ENCODE measurements at regions of chr4 and their contacts with region 1.

Region 1: DNA sequence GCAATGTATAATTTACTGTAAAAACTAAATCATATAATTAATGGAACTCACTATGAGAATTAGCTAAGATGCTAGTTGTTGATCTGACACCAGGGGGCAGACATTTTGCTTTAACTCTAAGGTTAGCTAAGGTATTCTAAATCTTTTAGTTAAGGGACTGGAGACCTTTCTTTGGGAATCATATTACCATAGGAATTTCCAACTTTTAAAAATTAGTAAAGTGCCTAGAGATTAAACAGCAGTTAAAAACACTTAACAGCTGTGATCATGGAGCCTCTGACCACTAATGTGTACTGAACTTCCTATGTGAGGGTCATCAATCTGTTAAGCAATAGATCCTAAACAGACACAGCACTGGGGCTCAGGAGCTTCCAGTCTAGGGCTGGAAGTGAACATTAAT is 226.6 kb downstream of the NSUN7 start:
- DNase-seq: peak; percentile 77
- H3K4me3 Mint-ChIP-seq: no peak overlapping the region
- H3K27ac Mint-ChIP-seq: peak overlapping the region; percentile 55
- H3K4me1 Mint-ChIP-seq: peaks cover 15% of the 10 kb centered on the region
- H3K27me3 Mint-ChIP-seq: no peaks in the 10 kb centered on the region
- CTCF ChIP-seq: peak; percentile 49

Region 2: GRCh38 chr4:40905414-40905813 is 70.9 kb before region 1 on chr4:
- CTCF ChIA-PET with region 1: no interaction called
- POLR2A ChIA-PET with region 1: no interaction called
- intact Hi-C with region 1: no loop called
- DNase-seq: no peak
- H3K4me3 Mint-ChIP-seq: no peak overlapping the region
- H3K27ac Mint-ChIP-seq: peak overlapping the region; percentile 58
- H3K4me1 Mint-ChIP-seq: peaks cover 23% of the 10 kb centered on the region
- H3K27me3 Mint-ChIP-seq: no peaks in the 10 kb centered on the region
- CTCF ChIP-seq: no peak

Region 3: DNA sequence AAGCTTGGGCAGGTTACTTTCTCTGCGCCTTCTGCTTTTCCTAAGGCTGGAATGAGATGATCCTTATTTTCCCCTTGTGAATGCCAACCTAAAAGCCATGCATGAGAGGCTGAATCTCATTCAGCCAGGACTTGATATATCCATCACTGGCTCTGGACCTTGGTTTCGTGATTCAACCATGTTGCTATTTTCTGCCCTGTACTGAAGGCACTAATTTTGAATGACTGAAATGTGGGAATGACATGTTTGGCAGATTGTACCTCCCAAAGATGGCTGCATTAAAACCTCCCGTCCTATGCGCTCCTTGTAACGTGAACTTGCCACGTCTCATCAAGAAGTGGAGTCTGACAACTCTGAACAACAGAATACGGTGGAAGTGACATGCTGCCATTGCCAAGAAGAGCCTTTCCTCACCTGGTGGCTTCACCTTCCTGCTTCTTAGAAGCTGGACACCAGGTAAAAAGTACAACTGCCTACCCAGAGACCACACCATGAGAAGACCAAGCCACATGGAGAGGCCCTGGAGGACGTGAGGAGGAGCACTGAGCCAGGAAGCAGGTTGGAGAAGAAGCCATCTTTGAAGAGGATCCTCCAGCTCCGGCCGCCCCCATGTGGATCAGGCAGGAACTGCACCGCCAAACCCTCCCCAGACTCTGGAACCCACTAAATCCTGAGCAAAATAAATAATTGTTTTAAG is 52.1 kb before region 1 on chr4:
- CTCF ChIA-PET with region 1: interaction called, 11 read pairs
- POLR2A ChIA-PET with region 1: no interaction called
- intact Hi-C with region 1: loop called (anchors 2 kb)
- DNase-seq: peak; percentile 69
- H3K4me3 Mint-ChIP-seq: no peak overlapping the region
- H3K27ac Mint-ChIP-seq: no peak overlapping the region
- H3K4me1 Mint-ChIP-seq: peaks cover 25% of the 10 kb centered on the region
- H3K27me3 Mint-ChIP-seq: no peaks in the 10 kb centered on the region
- CTCF ChIP-seq: peak; percentile 77

Region 4: GRCh38 chr4:40986375-40986774 is 10.0 kb after region 1 on chr4:
- CTCF ChIA-PET with region 1: interaction called, 48 read pairs
- POLR2A ChIA-PET with region 1: interaction called, 6 read pairs
- intact Hi-C with region 1: no loop called
- DNase-seq: no peak
- H3K4me3 Mint-ChIP-seq: no peak overlapping the region
- H3K27ac Mint-ChIP-seq: peak overlapping the region; percentile 16
- H3K4me1 Mint-ChIP-seq: peaks cover 31% of the 10 kb centered on the region
- H3K27me3 Mint-ChIP-seq: no peaks in the 10 kb centered on the region
- CTCF ChIP-seq: no peak

Region 5: GRCh38 chr4:40992472-40993295 is 16.3 kb after region 1 on chr4:
- CTCF ChIA-PET with region 1: interaction called, 48 read pairs
- POLR2A ChIA-PET with region 1: interaction called, 11 read pairs
- intact Hi-C with region 1: no loop called
- DNase-seq: peak; percentile 75
- H3K4me3 Mint-ChIP-seq: peak overlapping the region; percentile 43
- H3K27ac Mint-ChIP-seq: peak overlapping the region; percentile 80
- H3K4me1 Mint-ChIP-seq: peaks cover 63% of the 10 kb centered on the region
- H3K27me3 Mint-ChIP-seq: no peaks in the 10 kb centered on the region
- CTCF ChIP-seq: no peak

Region 6: DNA sequence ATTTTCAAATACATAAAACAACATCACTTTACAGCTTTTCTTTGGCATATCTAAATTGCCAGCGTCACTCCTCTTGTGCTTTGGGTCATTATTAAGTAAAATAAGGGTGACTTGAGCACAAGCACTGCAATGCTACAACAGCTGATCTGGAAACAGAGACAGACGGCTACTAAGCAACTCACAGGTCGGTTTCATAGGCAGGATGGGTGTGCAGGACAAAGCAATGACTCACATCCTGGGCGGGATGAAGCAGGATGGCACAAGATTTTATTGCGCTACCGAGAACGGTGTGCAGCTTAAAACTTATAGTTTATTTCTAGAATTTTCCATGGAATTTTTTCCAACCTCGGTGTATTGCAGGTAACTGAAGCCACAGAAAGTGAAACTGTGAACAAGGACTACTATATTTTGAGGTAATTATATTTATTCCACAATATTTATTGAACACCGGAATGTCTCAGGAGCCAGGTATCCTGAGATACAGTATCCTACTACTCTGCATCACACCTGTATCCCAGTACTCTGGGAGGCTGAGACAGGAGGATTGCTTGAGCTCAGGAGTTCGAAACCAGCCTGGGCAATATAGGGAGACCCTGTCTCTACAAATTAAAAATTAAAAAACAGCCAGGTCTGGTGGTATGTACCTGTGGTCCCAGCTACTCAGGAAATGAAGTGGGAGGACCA is 22.5 kb after region 1 on chr4:
- CTCF ChIA-PET with region 1: interaction called, 8 read pairs
- POLR2A ChIA-PET with region 1: interaction called, 11 read pairs
- intact Hi-C with region 1: no loop called
- DNase-seq: peak; percentile 92
- H3K4me3 Mint-ChIP-seq: peak overlapping the region; percentile 31
- H3K27ac Mint-ChIP-seq: peak overlapping the region; percentile 74
- H3K4me1 Mint-ChIP-seq: peaks cover 26% of the 10 kb centered on the region
- H3K27me3 Mint-ChIP-seq: no peaks in the 10 kb centered on the region
- CTCF ChIP-seq: no peak

Region 7: DNA sequence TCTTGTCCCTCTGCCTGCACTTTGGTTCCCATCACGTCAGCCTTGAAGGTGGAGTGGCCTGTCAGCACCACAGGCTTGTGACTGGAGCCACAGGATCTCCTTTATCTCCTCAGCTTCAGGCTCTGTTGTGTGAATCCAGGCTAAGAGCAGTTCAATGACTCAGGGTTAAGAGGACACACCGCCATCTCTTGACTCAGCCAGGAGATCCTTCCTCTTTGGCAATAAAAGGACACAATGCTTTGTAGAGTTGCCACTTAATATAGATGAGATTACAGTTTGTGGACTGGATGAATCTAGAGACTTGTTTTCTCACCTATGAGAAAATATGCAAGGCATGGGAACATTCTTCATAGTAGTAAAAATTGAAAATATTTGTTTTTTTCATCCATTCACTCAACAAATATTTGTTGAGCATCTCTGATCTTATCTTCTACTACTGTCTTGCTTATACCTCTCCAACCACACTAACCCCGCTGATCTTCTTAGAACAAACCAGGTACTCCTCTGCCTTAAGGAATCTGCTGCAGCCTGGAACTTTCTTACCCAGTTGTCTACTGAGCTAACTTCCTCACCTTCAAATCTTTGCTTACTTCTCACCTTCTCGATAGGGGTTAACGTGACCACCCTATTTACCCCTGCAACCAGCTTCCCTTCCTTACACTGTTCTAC is 342.7 kb after region 1 on chr4:
- CTCF ChIA-PET with region 1: no interaction called
- POLR2A ChIA-PET with region 1: no interaction called
- intact Hi-C with region 1: no loop called
- DNase-seq: peak; percentile 38
- H3K4me3 Mint-ChIP-seq: no peak overlapping the region
- H3K27ac Mint-ChIP-seq: peak overlapping the region; percentile 5
- H3K4me1 Mint-ChIP-seq: peaks cover 18% of the 10 kb centered on the region
- H3K27me3 Mint-ChIP-seq: no peaks in the 10 kb centered on the region
- CTCF ChIP-seq: no peak

Measured in MCF 10A (cell line).